Mammary epithelial cell (primary cell): ENCODE measurements at regions of chr12 and their contacts with region 1.

Region 1: DNA sequence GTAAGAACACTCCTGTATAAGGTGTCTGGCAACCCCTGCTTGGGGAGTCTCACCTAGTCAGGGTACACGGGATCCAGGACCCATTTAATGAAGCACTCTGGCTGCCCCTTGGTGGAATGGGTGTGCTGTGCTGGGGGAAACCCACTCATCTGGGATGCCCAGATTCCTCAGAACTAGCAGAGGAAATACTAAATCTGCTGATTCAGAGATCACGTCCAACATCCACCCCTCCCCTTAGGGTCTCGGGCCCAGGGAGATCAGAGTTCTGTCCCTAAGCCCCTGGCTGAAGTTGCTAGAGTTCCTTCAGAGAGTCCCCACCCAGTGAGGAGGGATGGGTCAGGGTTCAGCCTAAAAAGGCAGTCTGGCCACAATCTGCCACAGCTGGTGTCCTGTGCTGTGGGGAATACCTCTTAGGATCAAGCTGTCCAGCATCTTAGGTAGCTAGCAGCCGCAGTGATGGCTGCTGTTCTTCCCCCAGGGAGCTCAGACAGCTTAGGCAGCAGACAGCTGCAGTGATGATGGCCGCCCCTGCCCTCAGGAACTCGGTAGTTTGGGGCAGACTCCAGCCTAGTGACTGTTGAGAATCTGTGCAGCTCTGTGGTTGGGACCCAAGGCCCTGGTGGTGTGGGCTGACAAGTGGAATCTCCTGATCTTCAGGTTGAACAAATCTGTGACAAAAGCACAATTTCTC is 74.8 kb downstream of the IFNG-AS1 start:
- DNase-seq: no peak
- H3K4me3 ChIP-seq: no peak overlapping the region
- H3K27ac ChIP-seq: no peak overlapping the region
- H3K4me1 ChIP-seq: no peaks in the 10 kb centered on the region
- H3K27me3 ChIP-seq: no peaks in the 10 kb centered on the region
- CTCF ChIP-seq: no peak

Region 2: DNA sequence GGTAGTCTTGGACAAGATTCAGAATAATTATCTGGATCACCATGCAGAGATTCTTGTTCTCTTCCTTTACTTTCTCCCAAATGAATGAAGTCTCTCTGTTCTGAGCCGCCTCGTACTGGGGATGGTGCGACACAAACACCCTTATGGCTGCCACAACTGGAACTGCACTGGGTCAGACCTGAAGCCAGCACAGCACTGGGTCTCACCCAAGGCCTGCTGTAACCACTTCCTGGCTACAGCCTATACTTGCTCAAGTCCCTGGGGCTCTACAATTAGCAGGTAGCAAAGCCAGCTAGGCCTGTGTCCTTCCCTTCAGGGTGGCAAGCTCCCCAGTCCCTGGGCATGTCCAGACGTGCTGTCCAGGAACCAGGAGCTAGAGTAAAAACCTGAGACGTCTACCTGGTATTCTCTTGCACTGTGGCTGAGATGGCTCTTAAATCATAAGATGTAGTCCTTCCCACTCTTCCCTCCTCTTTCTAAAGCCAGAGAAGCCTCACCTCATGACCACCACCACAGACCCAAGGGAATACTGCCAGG is 67.9 kb after region 1 on chr12:
- CTCF ChIA-PET with region 1: no interaction called
- dilution Hi-C with region 1: loop called (anchors 5 kb)
- in situ Hi-C with region 1: no loop called
- intact Hi-C with region 1: no loop called
- DNase-seq: peak; percentile 71
- H3K4me3 ChIP-seq: no peak overlapping the region
- H3K27ac ChIP-seq: no peak overlapping the region
- H3K4me1 ChIP-seq: peaks cover 15% of the 10 kb centered on the region
- H3K27me3 ChIP-seq: no peaks in the 10 kb centered on the region
- CTCF ChIP-seq: no peak

Region 3: GRCh38 chr12:68158432-68158831 is 94.4 kb after region 1 on chr12:
- CTCF ChIA-PET with region 1: no interaction called
- dilution Hi-C with region 1: no loop called
- in situ Hi-C with region 1: no loop called
- intact Hi-C with region 1: no loop called
- DNase-seq: peak; percentile 35
- H3K4me3 ChIP-seq: no peak overlapping the region
- H3K27ac ChIP-seq: no peak overlapping the region
- H3K4me1 ChIP-seq: peaks cover 9% of the 10 kb centered on the region
- H3K27me3 ChIP-seq: no peaks in the 10 kb centered on the region
- CTCF ChIP-seq: peak; percentile 49 to 75